ENCODE measurements at regions of chr3 and their contacts with region 1.

Region 1: GRCh38 chr3:193564012-193564411 is 9.3 kb upstream of the ATP13A4 start:
- DNase-seq: peak; percentile 35 to 66
- H3K4me3 ChIP-seq: no peak overlapping the region
- H3K27ac ChIP-seq: no peak overlapping the region
- H3K4me1 ChIP-seq: no peaks in the 10 kb centered on the region
- H3K27me3 ChIP-seq: no peaks in the 10 kb centered on the region
- CTCF ChIP-seq: peak in 4 of 7 experiments; percentile 26 to 48 (median 36)
- EP300 ChIP-seq: no peak
- POLR2A ChIP-seq: no peak

Region 2: DNA sequence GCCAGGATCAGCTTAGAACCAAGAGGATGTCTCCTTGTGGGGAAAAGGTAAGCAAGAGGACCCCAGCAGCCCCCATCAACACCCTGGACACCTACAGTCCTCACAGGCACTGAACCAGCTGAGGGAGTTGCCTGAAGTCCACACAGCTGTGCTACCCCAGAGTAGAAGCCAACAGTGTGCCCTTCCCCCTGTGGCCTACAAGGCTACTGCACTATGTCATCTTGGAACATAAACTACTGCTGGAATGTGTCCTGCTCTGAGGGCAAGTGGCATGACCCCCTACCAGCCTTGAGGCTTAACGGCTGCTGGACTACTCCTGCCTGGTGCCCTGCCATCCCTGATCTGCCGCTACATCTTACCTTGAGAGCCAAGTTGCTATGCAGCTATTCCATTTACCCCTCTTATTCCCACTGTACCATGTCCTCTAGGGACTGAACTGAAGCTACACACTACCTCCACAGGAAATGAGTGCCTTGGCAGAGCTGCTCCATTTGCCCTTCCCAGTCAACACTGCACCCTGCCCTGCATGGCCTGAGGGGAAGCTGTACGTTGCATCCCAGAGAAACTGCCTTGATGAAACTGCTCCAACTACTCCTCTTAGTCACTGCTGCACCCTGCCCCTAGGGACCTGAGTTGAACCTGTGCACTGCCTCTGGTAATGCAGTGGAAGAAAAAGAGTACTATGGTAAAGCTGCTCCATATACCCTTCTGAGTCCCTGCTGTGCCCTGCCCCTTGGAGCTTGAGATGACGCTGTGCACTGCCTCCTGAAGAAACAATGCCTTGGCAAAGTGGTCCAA is 145.2 kb before region 1 on chr3:
- intact Hi-C with region 1: no loop called
- DNase-seq: no peak
- H3K4me3 ChIP-seq: no peak overlapping the region
- H3K27ac ChIP-seq: no peak overlapping the region
- H3K4me1 ChIP-seq: no peaks in the 10 kb centered on the region
- H3K27me3 ChIP-seq: no peaks in the 10 kb centered on the region
- CTCF ChIP-seq: no peak
- EP300 ChIP-seq: no peak
- POLR2A ChIP-seq: no peak

Region 3: GRCh38 chr3:193452338-193452737 is 111.7 kb before region 1 on chr3:
- intact Hi-C with region 1: loop called (anchors 10 kb)
- DNase-seq: no peak
- H3K4me3 ChIP-seq: no peak overlapping the region
- H3K27ac ChIP-seq: no peak overlapping the region
- H3K4me1 ChIP-seq: no peaks in the 10 kb centered on the region
- H3K27me3 ChIP-seq: no peaks in the 10 kb centered on the region
- CTCF ChIP-seq: no peak
- EP300 ChIP-seq: no peak
- POLR2A ChIP-seq: no peak

Measured in stomach (tissue), 19 donors.